ENCODE measurements at regions of chr17 and their contacts with region 1.

Region 1: DNA sequence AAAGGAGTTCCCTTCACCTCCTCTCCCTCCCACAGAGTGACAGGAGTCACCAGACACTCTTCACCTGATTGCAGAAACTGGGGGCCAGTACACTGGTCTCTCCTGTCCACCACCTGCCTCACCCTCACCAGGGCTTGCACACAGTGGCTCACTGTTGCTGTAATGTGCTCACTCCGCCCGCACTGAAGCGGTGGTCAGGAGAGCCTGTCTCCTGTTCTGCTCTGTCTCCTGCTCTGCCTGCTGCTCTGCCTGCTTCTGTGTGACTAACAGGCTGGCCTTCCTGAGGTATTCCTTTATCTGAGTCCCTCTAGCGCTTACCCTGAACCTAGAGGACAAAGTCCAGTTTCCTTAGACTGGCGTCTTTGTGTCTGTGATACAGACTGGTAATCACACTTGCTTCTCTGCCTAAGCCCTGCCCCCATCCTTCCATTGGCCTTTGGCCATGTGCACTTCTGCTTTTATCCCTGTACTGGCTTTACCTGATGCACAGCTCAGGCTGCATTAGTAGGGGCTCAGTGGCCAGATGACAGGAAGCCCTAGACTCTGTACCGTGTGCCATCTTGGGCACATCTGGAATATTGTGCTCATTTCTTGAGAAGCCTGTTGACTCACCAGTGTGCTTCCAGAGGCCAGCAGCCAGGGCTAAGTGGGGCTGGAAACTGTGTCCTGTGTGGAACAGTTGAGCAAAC is 13.3 kb downstream of the PROCA1 start:
- DNase-seq: peak; percentile 94 to 95
- H3K4me3 ChIP-seq: no peak overlapping the region
- H3K4me3 Mint-ChIP-seq: peak overlapping the region; percentile 52
- H3K27ac Mint-ChIP-seq: peak overlapping the region; percentile 87
- H3K4me1 ChIP-seq: peaks cover 31% of the 10 kb centered on the region
- H3K4me1 Mint-ChIP-seq: peaks cover 26% of the 10 kb centered on the region
- H3K27me3 ChIP-seq: no peaks in the 10 kb centered on the region
- H3K27me3 Mint-ChIP-seq: no peaks in the 10 kb centered on the region
- CTCF ChIP-seq: peak in 1 of 2 experiments; percentile 14

Region 2: DNA sequence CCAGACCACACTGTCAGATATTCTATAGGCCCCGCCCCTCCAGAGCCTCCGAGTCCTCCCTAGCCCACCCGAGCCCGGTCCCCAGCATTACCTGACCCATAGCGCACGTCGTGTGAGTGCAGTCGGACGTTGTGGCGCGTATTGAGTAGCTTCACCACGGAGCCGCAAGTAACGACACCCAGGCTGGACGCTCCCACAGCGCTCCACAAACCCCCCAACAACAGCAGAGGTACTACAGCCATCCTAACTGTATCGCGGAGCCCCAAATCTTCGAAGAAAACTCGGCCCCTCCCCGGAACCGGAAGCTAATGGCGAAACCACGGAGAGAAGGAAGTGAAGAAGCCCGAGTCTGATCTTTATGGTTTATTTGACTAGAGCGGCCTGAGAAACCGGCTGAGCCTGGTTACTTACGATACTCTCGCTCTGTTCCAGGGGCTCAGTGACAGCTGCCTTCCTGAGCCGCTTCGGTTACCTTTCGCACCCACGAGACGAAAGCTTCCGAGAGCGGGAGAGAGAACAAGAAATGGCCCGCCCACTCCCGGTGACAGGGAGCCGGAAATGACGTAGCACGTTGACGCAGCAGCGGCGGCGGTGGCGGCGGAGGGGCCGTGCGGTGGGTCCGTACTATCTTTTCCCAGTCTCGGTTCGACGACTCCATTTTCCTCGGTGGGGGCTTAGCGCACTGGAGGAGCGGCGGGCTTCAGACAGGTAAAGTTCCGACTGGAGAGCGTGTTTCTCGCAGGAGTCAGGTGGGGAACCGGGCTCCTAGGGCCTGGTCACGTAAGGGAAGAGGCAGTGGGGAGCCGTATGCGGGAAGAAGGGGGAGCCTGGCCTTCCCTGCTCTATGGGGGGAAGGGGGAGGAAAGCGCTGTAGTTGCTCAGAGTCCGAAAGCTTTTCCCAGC is 36.5 kb before region 1 on chr17 and contains the starts of genes SDF2 and SUPT6H:
- CTCF ChIA-PET with region 1: no interaction called
- POLR2A ChIA-PET with region 1: interaction called, 7 read pairs
- intact Hi-C with region 1: loop called (anchors 1 kb)
- DNase-seq: peak; percentile 91 to 94
- H3K4me3 ChIP-seq: peak within 1 kb of the TSS; percentile 80
- H3K4me3 Mint-ChIP-seq: peak within 1 kb of the TSS; percentile 89
- H3K27ac Mint-ChIP-seq: peak within 1 kb of the TSS; percentile 95
- H3K4me1 ChIP-seq: peaks cover 14% of the 10 kb centered on the region; the same call in 1 of the 2 replicates
- H3K4me1 Mint-ChIP-seq: peaks cover 31% of the 10 kb centered on the region
- H3K27me3 ChIP-seq: no peaks in the 10 kb centered on the region
- H3K27me3 Mint-ChIP-seq: no peaks in the 10 kb centered on the region
- CTCF ChIP-seq: no peak
- total RNA-seq, gene SDF2: 63.5 and 64.9 TPM in 2 replicates
- total RNA-seq, gene SUPT6H: 127 and 129 TPM in 2 replicates

Region 3: GRCh38 chr17:28675980-28676379 is 22.4 kb before region 1 on chr17:
- CTCF ChIA-PET with region 1: no interaction called
- POLR2A ChIA-PET with region 1: interaction called, 4 read pairs
- intact Hi-C with region 1: loop called (anchors 1 kb)
- DNase-seq: peak; percentile 50 to 59
- H3K4me3 ChIP-seq: no peak overlapping the region
- H3K4me3 Mint-ChIP-seq: no peak overlapping the region
- H3K27ac Mint-ChIP-seq: no peak overlapping the region
- H3K4me1 ChIP-seq: no peaks in the 10 kb centered on the region
- H3K4me1 Mint-ChIP-seq: no peaks in the 10 kb centered on the region
- H3K27me3 ChIP-seq: no peaks in the 10 kb centered on the region
- H3K27me3 Mint-ChIP-seq: no peaks in the 10 kb centered on the region
- CTCF ChIP-seq: peak in 1 of 2 experiments; percentile 88

Region 4: DNA sequence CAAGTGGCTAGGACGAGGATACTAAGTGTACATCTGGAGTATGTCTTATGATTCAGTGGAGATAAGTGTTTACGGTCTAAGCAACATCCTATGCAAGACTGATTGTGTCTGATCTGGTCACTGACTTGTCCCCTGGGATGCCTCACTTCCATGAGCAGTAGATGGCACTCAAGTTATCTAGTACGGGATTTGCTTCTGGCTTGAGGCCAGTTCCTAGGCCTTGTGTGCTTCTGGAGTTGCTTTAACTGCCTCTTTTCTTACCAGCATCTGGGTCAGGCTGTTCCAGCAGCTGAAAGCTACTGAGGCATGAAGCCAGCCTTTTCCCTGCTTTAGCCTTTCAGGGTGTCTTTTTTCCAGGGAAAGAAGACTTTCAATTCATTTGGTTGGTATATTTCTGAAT is 13.4 kb before region 1 on chr17:
- CTCF ChIA-PET with region 1: no interaction called
- POLR2A ChIA-PET with region 1: no interaction called
- intact Hi-C with region 1: loop called (anchors 1 kb)
- DNase-seq: peak in 1 of 2 experiments; percentile 57
- H3K4me3 ChIP-seq: no peak overlapping the region
- H3K4me3 Mint-ChIP-seq: no peak overlapping the region
- H3K27ac Mint-ChIP-seq: no peak overlapping the region
- H3K4me1 ChIP-seq: no peaks in the 10 kb centered on the region
- H3K4me1 Mint-ChIP-seq: no peaks in the 10 kb centered on the region
- H3K27me3 ChIP-seq: no peaks in the 10 kb centered on the region
- H3K27me3 Mint-ChIP-seq: no peaks in the 10 kb centered on the region
- CTCF ChIP-seq: peak in 1 of 2 experiments; percentile 42

Region 5: GRCh38 chr17:28710861-28711722 is 12.7 kb after region 1 on chr17:
- CTCF ChIA-PET with region 1: interaction called, 5 read pairs
- POLR2A ChIA-PET with region 1: interaction called, 22 read pairs
- intact Hi-C with region 1: loop called (anchors 1 kb)
- DNase-seq: peak; percentile 95 to 98
- H3K4me3 ChIP-seq: peak overlapping the region; percentile 64
- H3K4me3 Mint-ChIP-seq: peak overlapping the region; percentile 82
- H3K27ac Mint-ChIP-seq: peak overlapping the region; percentile 87
- H3K4me1 ChIP-seq: peaks cover 11% of the 10 kb centered on the region
- H3K4me1 Mint-ChIP-seq: peaks cover 6% of the 10 kb centered on the region
- H3K27me3 ChIP-seq: no peaks in the 10 kb centered on the region
- H3K27me3 Mint-ChIP-seq: no peaks in the 10 kb centered on the region
- CTCF ChIP-seq: no peak

Region 6: GRCh38 chr17:28717578-28718333 is 19.4 kb after region 1 on chr17 and contains the start of gene RAB34:
- CTCF ChIA-PET with region 1: interaction called, 11 read pairs
- POLR2A ChIA-PET with region 1: interaction called, 29 read pairs
- intact Hi-C with region 1: loop called (anchors 1 kb)
- DNase-seq: peak in 1 of 2 experiments; percentile 58
- H3K4me3 ChIP-seq: no peak within 1 kb of the TSS
- H3K4me3 Mint-ChIP-seq: peak within 1 kb of the TSS; percentile 94
- H3K27ac Mint-ChIP-seq: peak within 1 kb of the TSS; percentile 98
- H3K4me1 ChIP-seq: peaks cover 19% of the 10 kb centered on the region
- H3K4me1 Mint-ChIP-seq: peaks cover 18% of the 10 kb centered on the region
- H3K27me3 ChIP-seq: no peaks in the 10 kb centered on the region
- H3K27me3 Mint-ChIP-seq: no peaks in the 10 kb centered on the region
- CTCF ChIP-seq: no peak
- total RNA-seq, gene RAB34: 1.2 and 1.8 TPM in 2 replicates

Region 7: DNA sequence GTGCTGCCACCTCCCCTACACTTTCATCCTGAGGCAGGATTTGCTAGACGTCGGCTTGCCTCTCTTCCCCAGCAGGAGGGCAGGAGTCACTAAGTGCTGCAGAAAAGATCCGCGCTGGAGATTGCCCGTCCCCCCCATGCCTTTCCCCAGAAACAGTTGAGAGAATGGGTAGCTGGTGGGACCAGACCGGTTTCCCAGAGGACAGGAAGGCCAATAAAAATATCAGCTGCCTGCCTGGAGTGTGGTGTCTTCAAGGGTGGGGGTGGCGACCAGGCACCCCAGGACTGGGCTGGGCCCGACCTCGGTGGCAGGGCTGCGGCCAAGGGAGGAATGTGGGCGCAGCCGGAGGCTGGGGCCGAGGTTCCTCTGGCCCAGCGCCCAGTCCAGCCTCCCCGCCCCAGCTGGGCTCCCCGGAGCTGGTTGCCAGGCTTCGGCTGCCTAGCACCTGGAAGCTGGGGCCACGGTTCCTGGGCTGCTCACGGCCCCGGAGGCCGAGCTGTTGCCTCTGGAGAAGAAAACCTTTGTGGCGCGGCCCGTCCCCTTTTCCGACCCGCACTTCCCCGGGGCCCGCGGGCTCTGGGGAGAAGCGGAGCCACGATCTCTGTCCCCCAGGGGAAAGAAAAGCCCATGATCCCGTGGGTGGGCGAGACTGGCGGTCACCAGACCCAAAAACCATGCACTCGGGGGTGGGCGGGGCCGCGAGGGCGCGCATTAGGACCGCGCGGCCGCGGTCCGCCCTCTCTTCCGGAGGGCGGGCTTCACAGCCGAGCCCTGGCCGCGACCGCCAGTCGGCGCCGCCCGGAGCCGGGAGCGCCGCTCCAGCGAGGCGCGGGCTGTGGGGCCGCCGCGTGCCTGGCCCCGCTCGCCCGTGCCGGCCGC is 45.1 kb after region 1 on chr17 and contains the start of gene TRAF4:
- CTCF ChIA-PET with region 1: no interaction called
- POLR2A ChIA-PET with region 1: no interaction called
- intact Hi-C with region 1: loop called (anchors 1 kb)
- DNase-seq: peak; percentile 83 to 91
- H3K4me3 ChIP-seq: peak within 1 kb of the TSS; percentile 68
- H3K4me3 Mint-ChIP-seq: peak within 1 kb of the TSS; percentile 95
- H3K27ac Mint-ChIP-seq: peak within 1 kb of the TSS; percentile 96
- H3K4me1 ChIP-seq: peaks cover 40% of the 10 kb centered on the region
- H3K4me1 Mint-ChIP-seq: peaks cover 12% of the 10 kb centered on the region
- H3K27me3 ChIP-seq: no peaks in the 10 kb centered on the region
- H3K27me3 Mint-ChIP-seq: no peaks in the 10 kb centered on the region
- CTCF ChIP-seq: peak in 1 of 2 experiments; percentile 18
- total RNA-seq, gene TRAF4: 140 and 154 TPM in 2 replicates

Region 8: GRCh38 chr17:28812091-28812747 is 113.8 kb after region 1 on chr17:
- CTCF ChIA-PET with region 1: no interaction called
- POLR2A ChIA-PET with region 1: no interaction called
- intact Hi-C with region 1: no loop called
- DNase-seq: peak; percentile 99
- H3K4me3 ChIP-seq: peak overlapping the region; percentile 96
- H3K4me3 Mint-ChIP-seq: peak overlapping the region; percentile 93
- H3K27ac Mint-ChIP-seq: peak overlapping the region; percentile 75
- H3K4me1 ChIP-seq: peaks cover 18% of the 10 kb centered on the region
- H3K4me1 Mint-ChIP-seq: no peaks in the 10 kb centered on the region
- H3K27me3 ChIP-seq: no peaks in the 10 kb centered on the region
- H3K27me3 Mint-ChIP-seq: no peaks in the 10 kb centered on the region
- CTCF ChIP-seq: no peak

Region 9: DNA sequence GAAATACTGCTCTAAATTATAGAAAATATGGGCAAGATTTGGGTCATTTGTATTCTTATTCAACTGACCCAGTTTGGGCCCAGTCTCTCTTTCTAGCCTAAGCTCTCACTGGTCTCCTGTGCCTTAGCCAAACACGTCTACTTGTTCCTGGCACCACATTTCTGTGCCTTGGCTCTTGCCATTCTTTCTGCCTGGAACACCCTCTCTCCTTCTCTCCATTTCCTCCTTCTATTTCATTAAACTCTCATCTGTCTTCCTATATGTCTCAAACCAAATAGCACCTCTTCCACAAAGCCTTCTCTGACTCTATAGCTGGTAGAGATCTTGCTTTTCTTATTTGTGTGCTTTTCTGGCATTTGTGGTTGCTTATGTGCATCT is 633.3 kb after region 1 on chr17:
- CTCF ChIA-PET with region 1: no interaction called
- POLR2A ChIA-PET with region 1: no interaction called
- intact Hi-C with region 1: no loop called
- DNase-seq: no peak
- H3K4me3 ChIP-seq: no peak overlapping the region
- H3K4me3 Mint-ChIP-seq: no peak overlapping the region
- H3K27ac Mint-ChIP-seq: no peak overlapping the region
- H3K4me1 ChIP-seq: no peaks in the 10 kb centered on the region
- H3K4me1 Mint-ChIP-seq: no peaks in the 10 kb centered on the region
- H3K27me3 ChIP-seq: no peaks in the 10 kb centered on the region
- H3K27me3 Mint-ChIP-seq: no peaks in the 10 kb centered on the region
- CTCF ChIP-seq: no peak